HCT116 (cell line): ENCODE measurements at regions of chr7 and their contacts with region 1.

Region 1: GRCh38 chr7:31284106-31284505 is 56.4 kb downstream of the NEUROD6 start:
- DNase-seq: no peak
- ATAC-seq: no peak
- H3K4me3 ChIP-seq: no peak overlapping the region
- H3K27ac ChIP-seq: no peak overlapping the region
- H3K4me1 ChIP-seq: no peaks in the 10 kb centered on the region
- H3K27me3 ChIP-seq: no peaks in the 10 kb centered on the region; the same call in 1 of the 2 replicates
- CTCF ChIP-seq: no peak
- POLR2A ChIP-seq: no peak
- RAD21 ChIP-seq: no peak

Region 2: DNA sequence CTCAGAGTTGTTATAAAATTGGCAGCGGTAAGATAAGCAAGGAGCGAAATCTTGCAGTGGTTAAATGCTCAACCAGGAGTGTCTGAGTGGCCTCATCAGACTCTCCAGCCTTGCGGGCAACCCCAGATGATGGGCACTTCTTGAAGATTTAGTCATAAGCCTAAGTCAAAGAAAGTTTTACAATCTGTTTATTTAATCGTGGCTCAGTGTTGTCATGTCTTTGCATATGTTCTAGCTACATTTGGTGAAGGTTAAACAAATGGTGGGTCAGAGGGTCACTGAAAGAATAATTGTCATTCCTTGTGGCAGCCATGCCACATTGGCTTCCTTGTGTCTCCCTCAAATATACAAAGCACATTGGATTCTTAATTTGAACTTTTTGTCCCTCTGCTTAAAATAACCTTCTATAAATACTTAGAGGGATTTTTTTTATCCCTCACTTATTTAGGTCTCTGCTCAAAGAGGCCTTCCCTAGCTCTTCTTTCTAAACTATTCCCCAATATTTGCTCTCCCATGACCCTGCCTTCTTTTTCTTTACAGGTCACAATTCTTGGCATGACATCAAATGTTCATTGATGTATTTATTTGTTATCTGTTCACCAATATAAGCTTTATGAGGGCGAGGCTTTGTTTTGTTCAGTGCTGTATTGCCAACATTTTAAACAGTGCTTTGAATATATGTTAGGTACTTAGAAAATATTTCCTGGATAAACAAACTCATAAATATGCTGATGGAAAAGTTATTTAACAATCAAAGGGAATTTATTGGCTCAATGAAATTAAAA is 12.3 kb before region 1 on chr7:
- CTCF ChIA-PET with region 1: no interaction called
- POLR2A ChIA-PET with region 1: no interaction called
- RAD21 ChIA-PET with region 1: no interaction called
- intact Hi-C with region 1: no loop called
- DNase-seq: no peak
- ATAC-seq: no peak
- H3K4me3 ChIP-seq: no peak overlapping the region
- H3K27ac ChIP-seq: no peak overlapping the region
- H3K4me1 ChIP-seq: no peaks in the 10 kb centered on the region
- H3K27me3 ChIP-seq: peaks cover 32% of the 10 kb centered on the region
- CTCF ChIP-seq: no peak
- POLR2A ChIP-seq: no peak
- RAD21 ChIP-seq: no peak

Region 3: GRCh38 chr7:31408140-31408745 is 124.1 kb after region 1 on chr7:
- CTCF ChIA-PET with region 1: no interaction called
- POLR2A ChIA-PET with region 1: no interaction called
- RAD21 ChIA-PET with region 1: no interaction called
- intact Hi-C with region 1: loop called (anchors 5 kb)
- DNase-seq: peak; percentile 18
- ATAC-seq: 0 out of 2 replicates have a peak, but pooled peaks have one; percentile 47
- H3K4me3 ChIP-seq: no peak overlapping the region
- H3K27ac ChIP-seq: no peak overlapping the region
- H3K4me1 ChIP-seq: peaks cover 0 to 7% of the 10 kb centered on the region in 2 experiments; a peak in 1 of 4 replicates
- H3K27me3 ChIP-seq: peaks cover 8% of the 10 kb centered on the region; the same call in 1 of the 2 replicates
- CTCF ChIP-seq: no peak
- POLR2A ChIP-seq: no peak
- RAD21 ChIP-seq: no peak